Endothelial cell of umbilical vein (primary cell): ENCODE measurements at regions of chr12 and their contacts with region 1.

Region 1: GRCh38 chr12:88308825-88309224 is 166.7 kb downstream of the TMTC3 start:
- DNase-seq: peak; percentile 65
- H3K4me3 ChIP-seq: no peak overlapping the region
- H3K27ac ChIP-seq: peak overlapping the region; percentile 88
- H3K4me1 ChIP-seq: peaks cover 27% of the 10 kb centered on the region
- H3K27me3 ChIP-seq: no peaks in the 10 kb centered on the region
- CTCF ChIP-seq: no peak
- POLR2A ChIP-seq: no peak

Region 2: DNA sequence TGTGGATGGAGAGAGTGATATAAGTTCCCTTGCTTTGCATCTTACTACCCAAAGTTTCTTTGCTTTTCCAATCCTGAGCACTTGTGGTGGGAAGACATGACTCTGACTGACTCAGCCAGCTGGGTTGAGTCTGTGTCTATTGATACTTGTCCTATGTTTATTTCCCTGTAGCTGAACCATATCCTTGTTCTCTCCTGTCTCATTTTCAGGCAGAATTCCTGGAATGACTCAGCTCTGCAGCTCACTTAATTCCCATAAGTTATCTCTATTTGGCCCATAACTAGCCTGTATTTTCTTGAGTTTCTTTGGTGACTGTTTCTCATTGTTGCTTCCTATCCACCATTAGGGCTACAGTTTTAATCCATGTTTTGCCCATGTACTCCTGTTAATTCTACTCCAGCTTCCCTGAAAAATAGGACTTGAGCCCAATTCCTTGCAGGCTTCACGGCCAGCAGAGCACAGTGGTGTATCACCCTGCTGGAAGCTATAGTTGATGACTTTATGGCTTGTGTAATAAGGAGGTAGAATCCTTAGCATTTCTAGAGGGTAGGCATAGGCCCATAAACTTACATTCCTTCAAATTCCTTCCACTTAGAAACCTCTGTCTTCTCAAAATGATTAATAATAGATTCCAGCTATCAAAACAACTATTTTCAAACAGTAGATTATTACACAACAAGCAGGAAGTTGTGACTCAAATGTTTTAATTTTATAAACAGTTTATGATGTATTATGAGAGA is 16.4 kb after region 1 on chr12:
- CTCF ChIA-PET with region 1: interaction called, 5 read pairs
- POLR2A ChIA-PET with region 1: no interaction called
- dilution Hi-C with region 1: no loop called
- intact Hi-C with region 1: loop called (anchors 1 kb)
- DNase-seq: peak; percentile 88
- H3K4me3 ChIP-seq: no peak overlapping the region
- H3K27ac ChIP-seq: peak overlapping the region; percentile 76
- H3K4me1 ChIP-seq: peaks cover 18% of the 10 kb centered on the region
- H3K27me3 ChIP-seq: no peaks in the 10 kb centered on the region
- CTCF ChIP-seq: no peak
- POLR2A ChIP-seq: no peak

Region 3: GRCh38 chr12:88793096-88793495 is 484.3 kb after region 1 on chr12:
- CTCF ChIA-PET with region 1: no interaction called
- POLR2A ChIA-PET with region 1: no interaction called
- dilution Hi-C with region 1: no loop called
- intact Hi-C with region 1: no loop called
- DNase-seq: no peak
- H3K4me3 ChIP-seq: no peak overlapping the region
- H3K27ac ChIP-seq: no peak overlapping the region
- H3K4me1 ChIP-seq: no peaks in the 10 kb centered on the region
- H3K27me3 ChIP-seq: no peaks in the 10 kb centered on the region
- CTCF ChIP-seq: no peak
- POLR2A ChIP-seq: no peak